H1 (cell line): ENCODE measurements at regions of chr21 and their contacts with region 1.

Region 1: DNA sequence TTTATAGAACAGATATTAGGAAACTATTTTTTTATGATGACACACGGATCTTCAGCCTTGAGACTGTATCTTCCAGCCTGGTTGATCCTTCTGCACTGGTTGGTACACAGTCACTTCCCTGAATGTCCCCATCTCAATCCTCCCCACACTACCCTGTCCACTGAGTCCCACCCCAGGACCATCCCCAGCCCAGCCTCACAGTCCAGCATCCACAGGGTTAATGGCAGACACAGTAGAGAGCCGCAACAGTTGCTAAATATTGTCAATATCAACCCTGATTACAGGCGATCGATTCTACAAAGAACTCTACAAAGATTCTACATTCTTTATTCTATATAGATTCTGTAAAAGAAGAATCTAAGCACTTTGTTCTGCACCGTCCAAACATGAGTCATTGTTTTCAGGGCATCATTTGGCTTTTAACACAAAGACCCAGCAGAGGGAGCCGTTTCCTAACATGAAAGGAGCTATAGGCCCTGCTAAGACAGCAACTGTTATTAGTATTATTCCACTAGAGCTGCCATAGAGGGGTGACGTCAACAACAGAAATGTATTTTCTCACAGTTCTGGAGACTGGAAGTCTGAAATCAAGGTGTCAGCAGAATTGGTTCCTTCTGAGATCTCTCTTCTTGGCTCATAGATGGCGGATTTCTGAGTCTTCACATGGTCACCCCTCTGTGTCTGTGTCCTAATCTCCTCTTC is 30.1 kb upstream of the IFNAR2 start:
- DNase-seq: peak in 1 of 2 experiments; percentile 71
- H3K4me3 ChIP-seq: no peak overlapping the region
- H3K27ac ChIP-seq: no peak overlapping the region
- H3K4me1 ChIP-seq: peaks cover 0 to 8% (median 2%) of the 10 kb centered on the region in 4 experiments; a peak in 4 of 7 replicates
- H3K27me3 ChIP-seq: no peaks in the 10 kb centered on the region; a peak in 1 of 7 replicates
- CTCF ChIP-seq: peak in 2 of 3 experiments; percentile 73 to 82; a peak in 3 of 4 replicates
- EP300 ChIP-seq: no peak
- POLR2A ChIP-seq: no peak
- RAD21 ChIP-seq: peak; percentile 95 to 96

Region 2: DNA sequence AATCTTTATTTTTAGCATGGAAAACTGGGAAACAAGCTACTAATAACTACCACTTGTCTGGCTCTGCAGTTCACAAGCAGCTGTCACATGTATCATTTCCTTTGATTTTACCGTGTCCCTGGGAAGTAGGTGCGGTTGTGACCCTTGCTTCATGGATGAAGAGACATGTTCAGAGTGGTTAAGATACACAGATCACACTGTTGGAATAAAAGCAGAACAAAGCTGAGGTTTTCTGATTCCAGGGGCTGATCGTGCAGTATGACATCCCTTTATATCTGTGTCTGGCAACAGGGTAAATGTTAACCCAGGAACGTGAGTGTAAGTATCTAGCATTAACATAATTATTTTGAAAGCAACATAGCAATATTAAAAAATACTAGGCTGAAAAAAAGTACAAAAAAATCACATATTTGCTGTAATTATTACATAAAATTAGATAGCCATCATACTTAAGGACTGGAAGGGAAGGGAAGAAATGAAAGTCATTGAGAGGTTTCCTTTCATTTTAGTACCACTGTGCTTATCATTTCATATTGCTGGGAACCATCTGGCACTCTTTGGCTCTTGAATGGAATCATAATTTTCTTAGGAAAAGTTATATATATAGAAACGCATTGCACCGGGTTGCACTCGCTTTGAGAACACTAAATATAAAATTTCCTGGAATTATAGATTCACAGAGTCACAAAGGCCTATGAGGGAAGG is 365.3 kb before region 1 on chr21:
- CTCF ChIA-PET with region 1: interaction called, 23 read pairs
- POLR2A ChIA-PET with region 1: interaction called, 3 read pairs
- DNase-seq: no peak
- H3K4me3 ChIP-seq: no peak overlapping the region
- H3K27ac ChIP-seq: no peak overlapping the region
- H3K4me1 ChIP-seq: peaks cover 0 to 7% (median 5%) of the 10 kb centered on the region in 4 experiments; a peak in 3 of 7 replicates
- H3K27me3 ChIP-seq: no peaks in the 10 kb centered on the region
- CTCF ChIP-seq: no peak
- EP300 ChIP-seq: no peak
- POLR2A ChIP-seq: no peak
- RAD21 ChIP-seq: no peak

Region 3: DNA sequence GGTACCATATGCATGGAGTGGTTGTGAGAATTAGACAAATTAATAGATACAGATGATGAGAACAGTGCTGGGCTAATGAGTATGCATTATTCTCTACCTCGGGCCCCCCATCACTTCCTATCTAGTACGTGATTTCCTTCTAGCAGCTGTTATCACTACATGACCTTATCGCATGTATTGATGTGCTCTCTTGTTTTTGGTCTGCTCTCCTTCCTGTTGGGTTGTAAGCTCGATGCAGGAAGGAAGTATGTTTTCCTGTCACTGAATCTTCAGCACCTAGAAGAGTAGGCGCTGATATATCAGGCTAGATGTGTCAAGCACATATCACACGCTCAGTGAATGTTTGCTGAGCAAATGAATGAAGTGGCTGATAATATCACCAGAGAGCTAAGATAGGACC is 13.8 kb before region 1 on chr21:
- CTCF ChIA-PET with region 1: interaction called, 10 read pairs
- POLR2A ChIA-PET with region 1: no interaction called
- DNase-seq: no peak
- H3K4me3 ChIP-seq: no peak overlapping the region
- H3K27ac ChIP-seq: no peak overlapping the region
- H3K4me1 ChIP-seq: no peaks in the 10 kb centered on the region
- H3K27me3 ChIP-seq: no peaks in the 10 kb centered on the region
- CTCF ChIP-seq: no peak
- EP300 ChIP-seq: no peak
- POLR2A ChIP-seq: no peak
- RAD21 ChIP-seq: no peak

Region 4: DNA sequence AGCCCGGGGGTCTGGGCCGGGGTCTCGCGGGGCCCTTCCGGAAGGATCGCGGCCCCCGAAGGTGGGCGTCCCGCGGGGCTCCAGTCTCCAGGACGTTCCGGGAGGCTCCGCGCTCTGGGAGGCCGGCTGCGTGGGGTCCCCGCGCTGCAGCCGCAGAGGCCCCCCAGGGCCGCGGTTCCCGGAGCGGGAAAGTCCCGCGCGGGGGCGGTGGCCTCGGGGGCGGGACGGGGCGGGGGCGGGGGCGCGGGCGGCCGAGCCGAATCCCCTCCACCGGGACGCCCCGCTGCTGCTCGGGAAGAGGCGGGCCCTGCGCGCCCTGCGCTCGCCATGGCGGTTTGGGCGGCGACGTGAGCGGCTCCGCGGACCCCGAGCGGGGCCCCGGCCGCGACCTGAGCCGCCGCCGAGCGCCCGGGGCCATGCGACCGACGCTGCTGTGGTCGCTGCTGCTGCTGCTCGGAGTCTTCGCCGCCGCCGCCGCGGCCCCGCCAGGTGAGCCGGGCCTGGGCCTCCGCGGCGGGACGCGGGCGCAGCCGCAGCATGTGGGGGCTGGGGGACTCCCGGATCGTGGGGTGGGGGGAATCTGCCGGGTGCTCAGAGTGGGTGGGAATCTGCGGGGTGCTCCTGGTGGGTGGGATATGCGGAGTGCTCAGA is 203.6 kb after region 1 on chr21 and contains the start of gene IFNGR2:
- CTCF ChIA-PET with region 1: no interaction called
- POLR2A ChIA-PET with region 1: no interaction called
- DNase-seq: peak in 1 of 2 experiments; percentile 54
- H3K4me3 ChIP-seq: peak within 1 kb of the TSS; percentile 58 to 95 (median 76)
- H3K27ac ChIP-seq: no peak within 1 kb of the TSS; the same call in 1 of the 2 replicates
- H3K4me1 ChIP-seq: peaks cover 2 to 6% (median 3%) of the 10 kb centered on the region in 4 experiments
- H3K27me3 ChIP-seq: no peaks in the 10 kb centered on the region
- CTCF ChIP-seq: no peak
- EP300 ChIP-seq: no peak
- POLR2A ChIP-seq: no peak; a peak in 1 of 3 replicates
- RAD21 ChIP-seq: no peak
- total RNA-seq, gene IFNGR2: 34.9 and 36.0 TPM in 2 replicates